ENCODE measurements at regions of chr12 and their contacts with region 1.

Region 1: GRCh38 chr12:42129595-42130204 is 15.0 kb downstream of the GXYLT1 start:
- DNase-seq: no peak
- H3K4me3 ChIP-seq: no peak overlapping the region
- H3K27ac ChIP-seq: no peak overlapping the region
- H3K4me1 ChIP-seq: peaks cover 26% of the 10 kb centered on the region
- H3K27me3 ChIP-seq: no peaks in the 10 kb centered on the region
- CTCF ChIP-seq: peak; percentile 91

Region 2: GRCh38 chr12:41903014-41903708 is 226.5 kb before region 1 on chr12:
- intact Hi-C with region 1: no loop called
- DNase-seq: no peak
- H3K4me3 ChIP-seq: no peak overlapping the region
- H3K27ac ChIP-seq: no peak overlapping the region
- H3K4me1 ChIP-seq: no peaks in the 10 kb centered on the region
- H3K27me3 ChIP-seq: no peaks in the 10 kb centered on the region
- CTCF ChIP-seq: no peak

Region 3: DNA sequence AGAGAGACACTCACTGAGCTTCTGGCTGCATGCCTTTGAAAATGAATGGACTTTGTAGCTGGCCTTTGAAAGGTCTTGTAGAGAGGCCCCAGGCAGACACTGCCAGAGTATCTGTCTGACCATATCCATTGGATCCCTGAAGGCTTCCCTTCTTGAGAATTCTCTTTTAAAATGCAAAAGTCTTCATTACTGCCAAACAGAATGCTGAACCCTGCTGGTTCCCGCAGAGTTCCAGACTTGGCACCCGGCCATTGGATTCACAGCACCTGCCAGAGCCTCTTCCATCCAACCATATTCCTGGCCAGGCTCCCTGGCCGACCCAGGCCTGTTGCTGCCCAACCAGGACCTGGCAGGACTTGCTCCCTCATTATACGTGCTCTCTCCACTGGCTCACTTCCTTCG is 167.5 kb before region 1 on chr12:
- intact Hi-C with region 1: no loop called
- DNase-seq: peak; percentile 25
- H3K4me3 ChIP-seq: no peak overlapping the region
- H3K27ac ChIP-seq: no peak overlapping the region
- H3K4me1 ChIP-seq: no peaks in the 10 kb centered on the region
- H3K27me3 ChIP-seq: no peaks in the 10 kb centered on the region
- CTCF ChIP-seq: no peak

Region 4: DNA sequence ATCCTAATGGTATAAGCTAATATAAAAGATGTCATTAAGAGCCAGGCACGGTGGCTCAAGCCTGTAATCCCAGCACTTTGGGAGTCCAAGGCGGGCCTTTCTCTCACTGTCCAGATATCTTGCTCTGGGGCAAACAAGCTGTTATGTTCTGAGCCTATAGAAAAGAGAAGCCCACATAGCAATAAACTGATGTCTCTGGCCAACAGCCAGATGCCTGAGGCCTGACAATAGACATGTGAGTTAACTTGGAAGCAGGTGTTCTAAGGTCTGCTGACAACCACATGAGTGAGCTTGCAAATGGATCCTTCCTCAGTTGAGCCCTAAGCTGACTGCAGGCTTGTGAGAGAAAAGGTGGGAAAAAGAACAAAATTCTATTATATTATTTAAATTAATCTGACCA is 83.3 kb after region 1 on chr12:
- intact Hi-C with region 1: no loop called
- DNase-seq: no peak
- H3K4me3 ChIP-seq: no peak overlapping the region
- H3K27ac ChIP-seq: peak overlapping the region; percentile 68
- H3K4me1 ChIP-seq: peaks cover 45% of the 10 kb centered on the region
- H3K27me3 ChIP-seq: no peaks in the 10 kb centered on the region
- CTCF ChIP-seq: no peak

Region 5: GRCh38 chr12:42332301-42333285 is 202.9 kb after region 1 on chr12:
- intact Hi-C with region 1: loop called (anchors 5 kb)
- DNase-seq: no peak
- H3K4me3 ChIP-seq: no peak overlapping the region
- H3K27ac ChIP-seq: no peak overlapping the region
- H3K4me1 ChIP-seq: peaks cover 13% of the 10 kb centered on the region
- H3K27me3 ChIP-seq: no peaks in the 10 kb centered on the region
- CTCF ChIP-seq: peak; percentile 77

Region 6: DNA sequence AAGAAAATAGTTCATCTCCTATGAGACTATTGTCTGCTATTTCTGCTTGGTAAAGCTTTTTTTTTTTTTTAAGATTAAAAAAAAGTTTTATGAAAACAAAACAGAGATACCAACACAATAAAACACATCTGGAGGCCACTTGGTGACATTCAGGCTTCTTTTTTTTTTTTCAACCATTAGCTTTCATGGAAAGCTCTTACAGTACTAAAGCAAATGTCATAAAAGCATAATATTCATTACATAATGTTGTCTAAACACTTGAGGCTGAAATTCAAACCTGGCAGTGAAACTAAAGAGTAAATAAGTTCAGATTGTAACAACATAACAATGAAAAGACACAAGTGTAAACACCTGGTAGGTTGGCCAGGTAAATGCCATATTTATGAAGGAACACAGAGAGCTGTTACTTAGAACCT is 445.2 kb after region 1 on chr12:
- intact Hi-C with region 1: loop called (anchors 10 kb)
- DNase-seq: no peak
- H3K4me3 ChIP-seq: no peak overlapping the region
- H3K27ac ChIP-seq: no peak overlapping the region
- H3K4me1 ChIP-seq: peaks cover 58% of the 10 kb centered on the region
- H3K27me3 ChIP-seq: no peaks in the 10 kb centered on the region
- CTCF ChIP-seq: no peak

Measured in left ventricle myocardium inferior (tissue), 1 donor.